ENCODE measurements at regions of chr10 and their contacts with region 1.

Region 1: DNA sequence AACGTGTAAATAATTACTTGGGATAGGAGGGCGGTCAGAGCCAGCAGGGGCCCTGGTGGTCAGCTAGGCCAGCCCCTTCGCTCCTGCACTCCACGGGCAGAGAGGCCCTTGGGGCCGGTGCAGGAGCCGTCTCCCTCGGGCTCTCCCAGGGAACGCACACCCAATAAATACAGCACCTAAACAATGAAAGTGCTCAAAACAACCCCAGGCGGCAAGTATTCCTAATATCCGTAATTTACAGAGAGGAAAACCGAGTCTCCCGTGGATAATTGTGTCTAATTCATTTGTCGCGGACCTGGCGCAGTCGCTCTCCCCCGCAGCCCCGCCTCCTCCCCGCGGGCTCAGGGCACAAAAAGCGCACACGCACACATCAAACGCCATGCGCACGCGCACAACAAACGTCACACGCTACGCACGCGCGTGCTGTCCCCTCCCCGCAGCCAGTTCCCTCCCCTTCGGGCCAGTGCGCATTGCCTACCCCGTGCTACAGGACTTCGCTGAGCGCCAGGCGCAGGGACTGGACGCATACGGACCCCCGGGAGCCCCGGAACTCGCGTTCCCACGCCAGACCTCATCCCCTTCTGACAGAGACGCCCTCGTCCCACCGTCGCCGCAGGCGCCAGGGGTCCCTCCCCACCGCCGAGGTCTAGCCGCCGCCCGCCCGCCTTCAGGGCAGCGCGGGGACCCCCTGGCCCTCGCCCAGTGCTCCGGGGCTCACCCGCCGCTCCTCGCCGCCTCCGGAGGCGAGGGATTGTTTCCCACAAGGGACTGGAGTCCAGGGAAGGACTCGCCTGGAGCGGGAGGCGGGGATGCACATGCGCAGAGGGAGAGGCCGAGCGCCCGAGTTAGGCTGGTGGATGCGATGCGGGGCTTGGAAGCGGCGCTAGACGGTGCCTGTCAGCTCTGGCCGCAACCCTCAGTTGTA is at the start of gene ZNF248:
- DNase-seq: peak; percentile 93
- H3K4me3 Mint-ChIP-seq: peak within 1 kb of the TSS; percentile 92
- H3K27ac Mint-ChIP-seq: peak within 1 kb of the TSS; percentile 94
- H3K4me1 Mint-ChIP-seq: peaks cover 25% of the 10 kb centered on the region
- H3K27me3 Mint-ChIP-seq: no peaks in the 10 kb centered on the region
- total RNA-seq, gene ZNF248: 9.2 and 11.2 TPM in 2 replicates

Region 2: DNA sequence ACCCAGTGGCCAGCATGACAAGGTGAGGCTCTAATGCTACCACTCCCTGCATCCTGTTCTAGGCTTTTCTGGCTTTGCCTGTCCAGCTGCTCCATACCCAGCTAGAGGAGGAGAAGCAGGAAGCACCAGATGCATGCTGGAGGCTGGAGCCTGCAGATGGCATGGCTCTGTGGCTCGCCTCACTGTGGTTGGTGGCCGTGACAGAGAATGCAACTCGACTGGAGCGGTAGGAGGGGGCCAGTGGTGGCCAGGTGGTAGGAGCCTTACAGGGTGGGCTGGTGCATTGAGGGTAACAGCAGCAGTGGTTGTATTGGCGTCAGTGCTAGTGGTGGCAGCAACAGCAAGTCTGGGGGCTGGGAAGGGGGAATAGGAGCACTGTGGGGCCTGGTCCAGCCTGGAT is 128.7 kb before region 1 on chr10:
- intact Hi-C with region 1: no loop called
- DNase-seq: no peak
- H3K4me3 Mint-ChIP-seq: no peak overlapping the region
- H3K27ac Mint-ChIP-seq: no peak overlapping the region
- H3K4me1 Mint-ChIP-seq: peaks cover under 1% of the 10 kb centered on the region
- H3K27me3 Mint-ChIP-seq: no peaks in the 10 kb centered on the region

Region 3: DNA sequence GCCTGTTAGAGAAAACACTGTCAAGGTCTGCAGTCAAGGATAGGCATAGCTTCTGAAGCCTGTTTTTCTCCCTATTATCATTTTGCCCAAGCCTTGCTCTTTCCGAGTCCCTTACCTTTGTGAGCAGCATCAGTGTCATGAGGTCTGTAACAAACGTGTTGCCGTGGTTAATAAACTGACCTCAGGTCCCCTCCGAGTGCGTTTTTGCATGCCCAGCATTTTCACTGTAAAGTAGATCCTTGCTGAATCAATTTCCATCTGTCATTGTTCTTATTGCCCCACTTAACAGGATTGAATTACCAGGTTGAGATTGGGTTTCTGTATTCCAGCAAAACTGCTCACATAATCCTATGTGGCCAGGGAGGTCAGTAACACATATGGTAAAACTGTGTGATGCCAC is 110.5 kb before region 1 on chr10:
- intact Hi-C with region 1: loop called (anchors 10 kb)
- DNase-seq: no peak
- H3K4me3 Mint-ChIP-seq: no peak overlapping the region
- H3K27ac Mint-ChIP-seq: no peak overlapping the region
- H3K4me1 Mint-ChIP-seq: no peaks in the 10 kb centered on the region
- H3K27me3 Mint-ChIP-seq: no peaks in the 10 kb centered on the region

Region 4: GRCh38 chr10:37976091-37976879 is 118.7 kb after region 1 on chr10 and contains the start of gene ZNF25:
- intact Hi-C with region 1: loop called (anchors 1 kb)
- DNase-seq: peak; percentile 96
- H3K4me3 Mint-ChIP-seq: peak within 1 kb of the TSS; percentile 91
- H3K27ac Mint-ChIP-seq: peak within 1 kb of the TSS; percentile 97
- H3K4me1 Mint-ChIP-seq: peaks cover 19% of the 10 kb centered on the region
- H3K27me3 Mint-ChIP-seq: no peaks in the 10 kb centered on the region
- total RNA-seq, gene ZNF25: 7.2 and 9.0 TPM in 2 replicates

Region 5: GRCh38 chr10:38143587-38143986 is 286.0 kb after region 1 on chr10:
- intact Hi-C with region 1: no loop called
- DNase-seq: no peak
- H3K4me3 Mint-ChIP-seq: no peak overlapping the region
- H3K27ac Mint-ChIP-seq: no peak overlapping the region
- H3K4me1 Mint-ChIP-seq: no peaks in the 10 kb centered on the region
- H3K27me3 Mint-ChIP-seq: no peaks in the 10 kb centered on the region